Activated CD4-positive, alpha-beta memory T cell treated with anti-CD3 and anti-CD28 coated beads for 36 hours (primary cell): ENCODE measurements at regions of chr5 and their contacts with region 1.

Region 1: GRCh38 chr5:123511648-123512605 is at the start of gene CSNK1G3:
- DNase-seq: peak; percentile 97
- H3K4me3 Mint-ChIP-seq: peak within 1 kb of the TSS; percentile 99
- H3K27ac Mint-ChIP-seq: peak within 1 kb of the TSS; percentile 98
- H3K4me1 Mint-ChIP-seq: peaks cover 44% of the 10 kb centered on the region
- H3K27me3 Mint-ChIP-seq: no peaks in the 10 kb centered on the region
- total RNA-seq, gene CSNK1G3: 37.4 to 37.8 TPM

Region 2: DNA sequence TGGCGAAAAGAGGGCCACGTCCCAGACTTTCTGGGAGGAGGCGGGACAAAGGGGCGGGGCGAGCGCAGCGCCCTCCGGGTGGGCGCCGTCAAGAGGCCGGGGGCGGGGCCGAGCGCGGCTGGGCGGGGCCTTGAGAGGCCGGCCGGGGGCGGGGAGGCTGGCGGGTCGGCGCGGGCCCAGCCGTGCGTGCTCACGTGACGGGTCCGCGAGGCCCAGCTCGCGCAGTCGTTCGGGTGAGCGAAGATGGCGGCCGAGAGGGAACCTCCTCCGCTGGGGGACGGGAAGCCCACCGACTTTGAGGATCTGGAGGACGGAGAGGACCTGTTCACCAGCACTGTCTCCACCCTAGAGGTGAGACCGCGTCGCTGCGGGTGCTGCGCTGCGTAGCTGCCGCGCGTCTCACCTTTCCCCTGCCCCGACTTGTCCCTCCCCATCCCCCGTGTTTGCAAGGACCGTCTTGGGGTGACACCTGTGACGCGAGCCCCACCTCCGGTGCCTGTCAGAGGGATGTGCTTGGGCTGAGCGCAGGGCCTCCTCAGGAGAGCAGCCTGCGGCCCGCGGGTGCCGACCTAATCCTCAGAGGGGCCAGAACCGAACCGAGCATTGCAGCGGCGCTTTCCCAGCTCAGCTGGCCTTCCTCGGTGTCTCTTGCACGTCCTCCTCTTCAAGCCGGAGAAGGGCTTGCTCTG is 736.9 kb before region 1 on chr5 and contains the start of gene SNX2:
- CTCF ChIA-PET with region 1: no interaction called
- POLR2A ChIA-PET with region 1: no interaction called
- intact Hi-C with region 1: loop called (anchors 10 kb)
- DNase-seq: peak; percentile 93
- H3K4me3 Mint-ChIP-seq: peak within 1 kb of the TSS; percentile 92
- H3K27ac Mint-ChIP-seq: peak within 1 kb of the TSS; percentile 65
- H3K4me1 Mint-ChIP-seq: peaks cover 27% of the 10 kb centered on the region
- H3K27me3 Mint-ChIP-seq: no peaks in the 10 kb centered on the region
- total RNA-seq, gene SNX2: 44.5 to 44.6 TPM

Region 3: DNA sequence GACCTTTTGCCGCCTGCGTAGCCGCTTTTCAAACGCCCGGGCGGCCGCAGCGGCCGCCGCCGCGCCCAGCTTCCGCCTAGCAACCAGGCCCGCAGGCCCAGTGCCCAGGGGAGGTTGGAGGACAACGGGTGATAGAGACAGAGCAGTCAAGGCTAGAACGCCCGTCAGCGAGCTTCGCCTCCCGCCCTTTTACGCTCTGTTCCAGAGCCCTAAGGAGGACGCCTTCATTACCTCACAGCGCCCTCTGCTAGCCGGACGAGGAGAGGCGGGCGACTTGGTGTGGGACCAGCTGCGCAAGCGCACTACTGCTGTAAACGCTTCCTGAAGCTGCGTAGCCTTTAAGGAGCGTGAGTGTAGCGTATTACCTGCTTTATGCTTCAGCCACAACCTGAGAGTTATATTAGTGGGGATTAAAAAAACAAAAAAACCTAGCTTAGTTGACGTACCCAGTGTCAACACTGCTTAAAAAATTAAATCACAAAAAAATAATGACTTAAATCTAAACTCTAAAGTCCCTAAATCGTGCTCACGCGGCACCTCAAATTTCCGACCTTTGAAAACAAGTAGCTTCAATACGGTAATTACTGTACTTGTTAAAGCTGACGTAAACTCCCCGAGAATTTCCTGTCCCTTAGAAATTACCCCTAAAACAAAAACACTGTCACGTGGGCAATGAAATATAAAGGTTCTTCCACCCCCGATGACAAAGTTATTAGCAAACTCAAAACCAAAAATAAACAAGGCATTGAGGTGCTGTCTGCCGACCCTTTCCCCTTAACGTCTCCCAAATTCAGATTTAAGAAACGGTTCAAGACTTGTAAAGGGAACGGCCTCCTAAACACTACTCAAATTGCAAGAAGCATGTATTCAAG is 88.4 kb before region 1 on chr5 and contains the start of gene CEP120:
- CTCF ChIA-PET with region 1: interaction called, 31 read pairs
- POLR2A ChIA-PET with region 1: interaction called, 69 read pairs
- intact Hi-C with region 1: loop called (anchors 1 kb)
- DNase-seq: peak; percentile 98
- H3K4me3 Mint-ChIP-seq: no peak within 1 kb of the TSS
- H3K27ac Mint-ChIP-seq: no peak within 1 kb of the TSS
- H3K4me1 Mint-ChIP-seq: peaks cover 32% of the 10 kb centered on the region
- H3K27me3 Mint-ChIP-seq: no peaks in the 10 kb centered on the region
- total RNA-seq, gene CEP120: 31.7 to 33.2 TPM

Region 4: DNA sequence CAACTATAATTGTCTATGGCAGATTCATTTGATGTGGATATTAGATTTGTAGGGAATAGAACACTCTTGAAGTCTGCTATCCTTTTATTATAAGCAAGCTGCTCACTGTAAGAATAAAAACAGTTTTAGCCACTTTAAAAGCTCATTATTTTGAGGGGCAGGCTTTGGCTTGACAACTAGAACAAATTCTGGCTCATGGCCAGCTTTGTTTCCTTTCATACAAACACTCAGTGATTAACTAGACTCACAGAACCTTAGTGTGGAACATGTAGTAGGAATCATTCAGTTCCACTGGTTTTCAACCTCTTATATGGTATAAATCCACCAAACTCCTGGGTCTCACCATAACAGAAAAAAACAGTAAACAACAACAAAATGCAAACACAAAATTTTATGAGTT is 61.3 kb before region 1 on chr5:
- CTCF ChIA-PET with region 1: no interaction called
- POLR2A ChIA-PET with region 1: interaction called, 5 read pairs
- intact Hi-C with region 1: loop called (anchors 1 kb)
- DNase-seq: no peak
- H3K4me3 Mint-ChIP-seq: no peak overlapping the region
- H3K27ac Mint-ChIP-seq: no peak overlapping the region
- H3K4me1 Mint-ChIP-seq: peaks cover 27% of the 10 kb centered on the region
- H3K27me3 Mint-ChIP-seq: peaks cover 8% of the 10 kb centered on the region

Region 5: DNA sequence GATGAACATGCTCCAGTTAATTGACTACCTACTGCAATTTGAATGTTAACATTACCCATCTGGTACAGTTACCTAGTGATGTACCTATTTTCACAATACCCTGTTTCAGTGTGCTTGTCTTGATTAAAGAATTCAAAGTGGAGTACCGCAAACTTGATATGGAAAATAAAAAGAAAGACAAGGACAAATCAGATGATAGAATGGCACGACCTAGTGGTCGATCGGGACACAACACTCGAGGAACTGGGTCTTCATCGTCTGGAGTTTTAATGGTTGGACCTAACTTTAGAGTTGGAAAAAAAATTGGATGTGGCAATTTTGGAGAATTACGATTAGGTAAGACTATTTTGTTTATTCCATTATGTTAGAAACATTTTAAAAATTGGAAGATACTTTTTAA is 33.6 kb after region 1 on chr5:
- CTCF ChIA-PET with region 1: interaction called, 4 read pairs
- POLR2A ChIA-PET with region 1: no interaction called
- intact Hi-C with region 1: loop called (anchors 1 kb)
- DNase-seq: peak; percentile 22
- H3K4me3 Mint-ChIP-seq: no peak overlapping the region
- H3K27ac Mint-ChIP-seq: no peak overlapping the region
- H3K4me1 Mint-ChIP-seq: peaks cover 60% of the 10 kb centered on the region
- H3K27me3 Mint-ChIP-seq: no peaks in the 10 kb centered on the region

Region 6: DNA sequence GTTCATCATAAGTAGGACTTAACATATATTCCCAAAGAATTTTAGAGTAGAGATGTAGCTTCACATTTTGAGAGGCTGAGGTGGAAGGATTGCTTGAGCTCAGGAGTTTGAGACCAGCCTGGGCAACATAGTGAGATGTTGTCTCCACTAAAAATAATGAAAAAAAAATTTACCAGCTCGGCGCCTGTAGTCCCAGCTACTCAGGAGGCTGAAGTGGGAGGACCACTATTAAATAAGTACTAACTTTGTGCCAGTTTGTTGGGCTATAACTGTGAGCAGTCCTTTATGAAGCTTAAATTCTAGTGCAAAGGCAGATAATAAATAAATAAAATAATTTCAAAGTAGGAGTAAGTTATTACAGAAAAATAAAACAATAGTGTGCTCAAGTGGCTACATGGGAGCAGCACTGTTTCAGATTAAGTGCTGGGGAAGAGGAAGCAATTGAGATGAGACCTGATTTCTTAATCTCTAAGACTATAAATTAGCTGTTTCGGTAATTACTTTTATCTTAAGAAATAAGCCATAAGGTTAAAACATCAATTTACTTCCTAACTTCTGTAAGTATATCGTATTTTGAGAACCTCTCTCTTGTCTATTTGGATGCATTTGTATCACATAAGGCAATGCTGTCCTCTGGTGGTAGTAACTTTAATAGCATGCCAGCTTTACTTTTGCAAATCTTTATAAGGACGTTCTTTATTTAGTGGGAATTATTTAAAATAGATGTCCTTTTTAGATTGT is 98.9 kb after region 1 on chr5:
- CTCF ChIA-PET with region 1: interaction called, 3 read pairs
- POLR2A ChIA-PET with region 1: no interaction called
- intact Hi-C with region 1: loop called (anchors 2 kb)
- DNase-seq: no peak
- H3K4me3 Mint-ChIP-seq: no peak overlapping the region
- H3K27ac Mint-ChIP-seq: no peak overlapping the region
- H3K4me1 Mint-ChIP-seq: peaks cover 10% of the 10 kb centered on the region
- H3K27me3 Mint-ChIP-seq: no peaks in the 10 kb centered on the region